ENCODE measurements at regions of chr10 and their contacts with region 1.

Region 1: DNA sequence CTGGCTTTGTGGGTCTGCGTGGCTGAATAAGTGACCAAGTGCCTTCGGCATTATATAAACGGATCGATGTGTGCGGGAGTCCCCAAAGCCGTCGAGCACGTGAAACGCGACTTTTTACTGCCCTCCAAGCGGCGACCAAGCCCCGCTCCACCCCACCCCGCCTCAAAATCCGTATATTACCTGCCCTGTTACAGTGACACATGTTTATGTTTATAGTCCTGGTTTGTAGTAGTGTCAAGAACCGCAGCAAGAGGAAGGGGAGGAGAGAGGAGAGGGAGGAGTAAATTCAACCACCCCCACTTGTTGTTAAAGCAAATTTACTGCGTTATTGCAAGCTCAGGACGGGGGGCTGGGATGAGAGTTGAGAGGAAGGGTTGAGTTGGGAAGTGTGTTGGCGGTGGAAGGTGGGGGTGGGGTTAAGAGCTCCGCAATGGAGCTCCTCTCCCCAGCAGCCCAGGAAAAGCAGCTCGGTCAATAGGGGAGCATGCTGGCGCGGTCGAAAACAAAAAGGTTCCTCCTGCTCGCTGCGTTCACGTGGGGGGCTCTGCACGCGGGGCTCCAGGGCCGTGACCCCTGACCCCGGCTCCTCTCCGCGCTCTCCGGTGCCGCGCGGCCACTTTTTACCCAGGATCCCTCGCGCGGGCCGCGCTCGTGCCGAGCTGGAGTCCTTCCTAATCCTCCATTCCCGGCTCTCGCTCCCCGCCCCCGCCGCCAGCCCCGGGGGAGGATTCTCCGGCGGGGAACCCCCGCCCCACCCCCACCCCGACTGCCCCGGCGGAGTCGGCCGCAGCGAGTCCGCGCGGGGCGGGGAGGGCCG is at the start of gene SKIDA1:
- DNase-seq: peak; percentile 72
- H3K4me3 Mint-ChIP-seq: peak within 1 kb of the TSS; percentile 94
- H3K27ac Mint-ChIP-seq: peak within 1 kb of the TSS; percentile 92
- H3K4me1 Mint-ChIP-seq: peaks cover 22% of the 10 kb centered on the region
- H3K27me3 Mint-ChIP-seq: peaks cover 28% of the 10 kb centered on the region
- total RNA-seq, gene SKIDA1: 0.10 TPM in 1 of 2 experiments, not detected in the other

Region 2: DNA sequence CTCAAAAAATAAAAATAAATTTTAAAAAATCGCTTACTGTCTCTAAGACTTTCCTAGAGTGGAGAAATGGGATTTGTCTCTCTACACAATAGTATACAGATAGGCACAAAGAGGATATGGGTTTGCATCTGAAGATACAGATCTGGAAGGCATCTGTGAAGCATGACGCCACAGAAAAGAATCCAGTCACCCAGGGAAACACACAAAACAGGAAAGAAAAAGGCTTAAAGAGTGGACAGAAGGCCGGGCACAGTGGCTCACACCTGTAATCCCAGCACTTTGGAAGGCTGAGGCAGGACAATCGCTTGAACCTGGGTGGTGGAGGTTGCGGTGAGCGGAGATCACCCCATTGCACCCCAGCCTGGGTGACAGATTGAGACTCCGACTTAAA is 61.4 kb before region 1 on chr10:
- CTCF ChIA-PET with region 1: no interaction called
- intact Hi-C with region 1: no loop called
- DNase-seq: no peak
- H3K4me3 Mint-ChIP-seq: no peak overlapping the region
- H3K27ac Mint-ChIP-seq: no peak overlapping the region
- H3K4me1 Mint-ChIP-seq: no peaks in the 10 kb centered on the region
- H3K27me3 Mint-ChIP-seq: peaks cover 2% of the 10 kb centered on the region

Region 3: DNA sequence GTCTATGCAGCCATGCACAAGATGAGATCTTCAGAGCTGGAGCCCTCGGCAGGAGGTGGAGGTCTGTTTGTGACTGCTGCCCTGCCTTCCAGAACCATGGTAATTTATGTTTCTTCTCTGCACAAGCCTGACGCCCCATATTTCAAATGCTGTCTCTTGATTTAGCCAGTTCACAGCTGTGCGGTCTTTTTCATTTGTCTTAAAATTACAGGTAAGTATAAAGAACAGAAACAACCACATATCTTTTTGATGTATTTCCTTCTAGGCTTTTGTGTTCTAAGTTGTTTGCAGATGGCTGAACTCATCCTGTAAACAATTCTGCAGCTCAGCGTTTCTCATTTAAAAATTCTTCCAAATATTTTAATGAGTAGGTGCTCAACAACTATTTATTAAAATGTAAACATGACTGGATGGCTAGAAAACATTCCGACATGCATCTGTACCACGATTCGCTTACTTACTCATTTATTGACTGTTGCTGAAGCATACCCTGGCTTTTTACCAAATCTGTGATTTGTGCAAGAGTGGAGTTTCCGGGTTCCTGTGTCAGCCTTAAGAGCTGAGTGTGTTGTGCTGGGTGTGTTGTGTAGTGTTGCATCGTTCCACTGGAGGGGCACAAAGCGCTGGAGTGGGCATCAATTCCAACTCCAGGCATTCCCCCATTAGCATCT is 1129.9 kb after region 1 on chr10:
- CTCF ChIA-PET with region 1: no interaction called
- intact Hi-C with region 1: loop called (anchors 10 kb)
- DNase-seq: peak; percentile 69
- H3K4me3 Mint-ChIP-seq: peak overlapping the region; percentile 46
- H3K27ac Mint-ChIP-seq: peak overlapping the region; percentile 89
- H3K4me1 Mint-ChIP-seq: peaks cover 99% of the 10 kb centered on the region
- H3K27me3 Mint-ChIP-seq: no peaks in the 10 kb centered on the region

Measured in activated naive CD4-positive, alpha-beta T cell treated with anti-CD3 and anti-CD28 coated beads for 36 hours (primary cell).